ENCODE measurements at regions of chr3 and their contacts with region 1.

Region 1: GRCh38 chr3:39171860-39172259 is 18.5 kb upstream of the CSRNP1 start:
- DNase-seq: no peak
- ATAC-seq: no peak
- H3K4me3 Mint-ChIP-seq: no peak overlapping the region
- H3K27ac Mint-ChIP-seq: no peak overlapping the region
- H3K4me1 Mint-ChIP-seq: peaks cover 22% of the 10 kb centered on the region
- H3K27me3 Mint-ChIP-seq: no peaks in the 10 kb centered on the region
- CTCF ChIP-seq: no peak

Region 2: GRCh38 chr3:39154280-39155021 is 17.4 kb before region 1 on chr3:
- CTCF ChIA-PET with region 1: interaction called, 12 read pairs
- POLR2A ChIA-PET with region 1: interaction called, 4 read pairs
- intact Hi-C with region 1: no loop called
- DNase-seq: no peak
- ATAC-seq: no peak
- H3K4me3 Mint-ChIP-seq: peak overlapping the region; percentile 70
- H3K27ac Mint-ChIP-seq: peak overlapping the region; percentile 76
- H3K4me1 Mint-ChIP-seq: peaks cover 43% of the 10 kb centered on the region
- H3K27me3 Mint-ChIP-seq: peaks cover 1% of the 10 kb centered on the region
- CTCF ChIP-seq: no peak

Region 3: GRCh38 chr3:39234705-39235104 is 62.8 kb after region 1 on chr3:
- CTCF ChIA-PET with region 1: no interaction called
- POLR2A ChIA-PET with region 1: no interaction called
- intact Hi-C with region 1: no loop called
- DNase-seq: peak; percentile 46
- ATAC-seq: peak; percentile 96
- H3K4me3 Mint-ChIP-seq: no peak overlapping the region
- H3K27ac Mint-ChIP-seq: peak overlapping the region; percentile 64
- H3K4me1 Mint-ChIP-seq: peaks cover 14% of the 10 kb centered on the region
- H3K27me3 Mint-ChIP-seq: peaks cover 7% of the 10 kb centered on the region
- CTCF ChIP-seq: no peak

Region 4: GRCh38 chr3:39358333-39358732 is 186.5 kb after region 1 on chr3:
- CTCF ChIA-PET with region 1: no interaction called
- POLR2A ChIA-PET with region 1: no interaction called
- intact Hi-C with region 1: no loop called
- DNase-seq: no peak
- ATAC-seq: no peak
- H3K4me3 Mint-ChIP-seq: no peak overlapping the region
- H3K27ac Mint-ChIP-seq: no peak overlapping the region
- H3K4me1 Mint-ChIP-seq: peaks cover 39% of the 10 kb centered on the region
- H3K27me3 Mint-ChIP-seq: no peaks in the 10 kb centered on the region
- CTCF ChIP-seq: no peak